A549 (cell line): ENCODE measurements at regions of chr2 and their contacts with region 1.

Region 1: DNA sequence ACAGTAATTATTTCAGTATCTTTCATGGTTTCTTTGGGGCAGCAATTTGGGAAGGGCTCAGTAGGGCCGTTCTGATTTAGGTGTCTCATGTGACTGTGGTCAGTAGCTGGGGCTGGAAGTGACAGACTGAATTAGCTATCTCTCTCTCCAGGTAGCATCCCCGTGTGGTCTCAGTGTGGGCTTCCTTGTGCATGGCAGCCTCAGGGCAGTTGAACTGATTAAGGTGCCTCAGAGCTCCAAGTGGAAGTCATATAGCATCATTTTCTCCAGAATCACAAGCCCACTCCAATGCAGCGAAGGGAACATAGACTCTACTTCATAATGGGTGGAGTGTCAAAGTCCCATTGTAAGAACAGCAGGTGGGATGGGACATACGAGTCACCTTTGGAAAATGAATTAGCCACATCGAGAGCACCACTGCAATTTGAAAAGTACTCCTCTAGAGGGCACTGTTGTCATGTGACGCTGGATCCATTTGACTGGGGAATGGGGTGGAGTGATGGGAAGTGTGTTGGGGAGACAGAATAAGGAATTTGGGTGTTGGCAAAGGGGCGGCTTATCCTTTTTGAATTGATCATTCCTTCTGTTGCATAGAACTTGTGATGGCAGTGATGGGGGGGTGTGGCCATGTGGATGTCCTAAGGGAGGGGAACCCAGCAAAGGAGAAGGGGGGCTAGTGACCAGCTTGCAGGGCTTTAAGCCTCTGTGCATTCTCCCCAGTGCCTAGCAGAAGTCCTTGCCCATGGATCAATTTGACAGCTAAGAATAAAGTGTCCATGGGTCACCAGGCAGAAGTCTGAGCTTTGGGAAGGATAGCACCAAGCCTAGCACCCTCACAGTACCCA is 39.3 kb upstream of the FAM136A start:
- DNase-seq: peak; percentile 60 to 91
- ATAC-seq: peak; percentile 66 to 88; a peak in 5 of 6 replicates
- H3K4me3 ChIP-seq: no peak overlapping the region
- H3K27ac ChIP-seq: no peak overlapping the region
- H3K4me1 ChIP-seq: peaks cover 9% of the 10 kb centered on the region; the same call in 1 of the 3 replicates
- CTCF ChIP-seq: peak; percentile 98
- EP300 ChIP-seq: no peak
- POLR2A ChIP-seq: no peak
- RAD21 ChIP-seq: peak; percentile 97 to 98

Region 2: DNA sequence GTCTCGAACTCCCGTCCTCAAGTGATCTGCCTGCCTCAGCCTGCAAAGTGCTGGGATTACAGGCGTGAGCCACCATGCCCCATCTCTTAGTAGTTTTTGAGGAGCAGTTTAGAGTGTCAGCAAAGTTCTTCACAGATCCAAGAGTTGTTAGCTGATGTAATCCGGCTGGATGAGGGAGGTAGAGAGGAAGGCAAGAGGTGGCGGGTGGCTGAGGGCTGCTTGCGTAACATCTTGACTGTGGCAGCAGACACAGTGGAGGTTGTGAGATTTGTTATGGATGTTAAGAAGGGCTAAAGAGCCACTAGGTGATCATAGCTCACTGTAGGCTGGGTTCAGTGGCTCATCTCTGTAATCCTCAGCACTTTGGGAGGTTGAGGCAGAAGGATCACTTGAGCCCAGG is 19.8 kb before region 1 on chr2:
- CTCF ChIA-PET with region 1: interaction called, 35 read pairs
- POLR2A ChIA-PET with region 1: no interaction called
- DNase-seq: no peak
- ATAC-seq: no peak
- H3K4me3 ChIP-seq: no peak overlapping the region
- H3K27ac ChIP-seq: no peak overlapping the region
- H3K4me1 ChIP-seq: no peaks in the 10 kb centered on the region
- CTCF ChIP-seq: no peak
- EP300 ChIP-seq: no peak
- POLR2A ChIP-seq: no peak
- RAD21 ChIP-seq: no peak

Region 3: GRCh38 chr2:70360661-70361316 is 19.6 kb after region 1 on chr2:
- CTCF ChIA-PET with region 1: interaction called, 34 read pairs
- POLR2A ChIA-PET with region 1: no interaction called
- DNase-seq: peak in 1 of 2 experiments; percentile 66
- ATAC-seq: peak in 1 of 2 experiments; percentile 52; a peak in 3 of 6 replicates
- H3K4me3 ChIP-seq: no peak overlapping the region
- H3K27ac ChIP-seq: no peak overlapping the region
- H3K4me1 ChIP-seq: peaks cover 24% of the 10 kb centered on the region
- CTCF ChIP-seq: no peak
- EP300 ChIP-seq: no peak
- POLR2A ChIP-seq: no peak
- RAD21 ChIP-seq: no peak

Region 4: GRCh38 chr2:70553584-70554337 is 212.6 kb after region 1 on chr2 and contains the start of gene TGFA:
- CTCF ChIA-PET with region 1: interaction called, 16 read pairs
- POLR2A ChIA-PET with region 1: no interaction called
- DNase-seq: peak; percentile 68 to 82
- ATAC-seq: peak; percentile 87 to 93
- H3K4me3 ChIP-seq: peak within 1 kb of the TSS; percentile 59
- H3K27ac ChIP-seq: peak within 1 kb of the TSS; percentile 75 to 86
- H3K4me1 ChIP-seq: peaks cover 12% of the 10 kb centered on the region; the same call in 2 of the 3 replicates
- CTCF ChIP-seq: peak; percentile 65
- EP300 ChIP-seq: peak in 1 of 2 experiments; percentile 9; a peak in 1 of 5 replicates
- POLR2A ChIP-seq: peak; percentile 51
- RAD21 ChIP-seq: peak; percentile 52 to 66
- polyA plus RNA-seq, gene TGFA: 3.5 and 3.6 TPM in 2 replicates

Region 5: GRCh38 chr2:70627211-70627902 is 286.2 kb after region 1 on chr2:
- CTCF ChIA-PET with region 1: interaction called, 10 read pairs
- POLR2A ChIA-PET with region 1: no interaction called
- DNase-seq: peak in 1 of 2 experiments; percentile 64
- ATAC-seq: no peak
- H3K4me3 ChIP-seq: no peak overlapping the region
- H3K27ac ChIP-seq: no peak overlapping the region
- H3K4me1 ChIP-seq: peaks cover 8% of the 10 kb centered on the region
- CTCF ChIP-seq: no peak
- EP300 ChIP-seq: no peak
- POLR2A ChIP-seq: no peak
- RAD21 ChIP-seq: no peak